Activated CD4-positive, alpha-beta memory T cell treated with anti-CD3 and anti-CD28 coated beads, Interleukin-2, amount 10 ng/mL, durations not matched to agents 7 days and 5 days (primary cell): ENCODE measurements at regions of chr16 and their contacts with region 1.

Region 1: GRCh38 chr16:27318392-27319226 is 4.8 kb downstream of the IL4R start:
- DNase-seq: peak; percentile 72
- H3K4me3 Mint-ChIP-seq: peak overlapping the region; percentile 97
- H3K27ac Mint-ChIP-seq: peak overlapping the region; percentile 98
- H3K4me1 Mint-ChIP-seq: peaks cover 75% of the 10 kb centered on the region
- H3K27me3 Mint-ChIP-seq: no peaks in the 10 kb centered on the region

Region 2: DNA sequence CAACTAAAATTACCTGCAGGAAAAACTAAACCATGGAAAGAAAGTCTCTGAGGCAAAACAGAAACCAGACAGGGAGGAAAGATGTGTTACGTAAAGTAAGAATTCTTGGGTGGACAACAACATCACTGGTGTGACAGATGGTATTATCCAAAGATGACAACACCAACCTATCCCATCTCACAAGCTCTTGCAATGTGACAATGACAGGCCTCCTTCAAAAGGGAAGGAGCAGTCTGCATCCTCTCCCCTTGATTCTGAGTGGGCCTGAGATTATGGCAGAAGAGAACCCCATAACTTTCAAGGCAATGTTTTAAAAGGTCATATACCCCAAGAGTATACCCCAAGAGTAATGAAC is 132.9 kb before region 1 on chr16:
- CTCF ChIA-PET with region 1: no interaction called
- POLR2A ChIA-PET with region 1: no interaction called
- DNase-seq: no peak
- H3K4me3 Mint-ChIP-seq: no peak overlapping the region
- H3K27ac Mint-ChIP-seq: no peak overlapping the region
- H3K4me1 Mint-ChIP-seq: peaks cover 3% of the 10 kb centered on the region
- H3K27me3 Mint-ChIP-seq: peaks cover 12% of the 10 kb centered on the region

Region 3: DNA sequence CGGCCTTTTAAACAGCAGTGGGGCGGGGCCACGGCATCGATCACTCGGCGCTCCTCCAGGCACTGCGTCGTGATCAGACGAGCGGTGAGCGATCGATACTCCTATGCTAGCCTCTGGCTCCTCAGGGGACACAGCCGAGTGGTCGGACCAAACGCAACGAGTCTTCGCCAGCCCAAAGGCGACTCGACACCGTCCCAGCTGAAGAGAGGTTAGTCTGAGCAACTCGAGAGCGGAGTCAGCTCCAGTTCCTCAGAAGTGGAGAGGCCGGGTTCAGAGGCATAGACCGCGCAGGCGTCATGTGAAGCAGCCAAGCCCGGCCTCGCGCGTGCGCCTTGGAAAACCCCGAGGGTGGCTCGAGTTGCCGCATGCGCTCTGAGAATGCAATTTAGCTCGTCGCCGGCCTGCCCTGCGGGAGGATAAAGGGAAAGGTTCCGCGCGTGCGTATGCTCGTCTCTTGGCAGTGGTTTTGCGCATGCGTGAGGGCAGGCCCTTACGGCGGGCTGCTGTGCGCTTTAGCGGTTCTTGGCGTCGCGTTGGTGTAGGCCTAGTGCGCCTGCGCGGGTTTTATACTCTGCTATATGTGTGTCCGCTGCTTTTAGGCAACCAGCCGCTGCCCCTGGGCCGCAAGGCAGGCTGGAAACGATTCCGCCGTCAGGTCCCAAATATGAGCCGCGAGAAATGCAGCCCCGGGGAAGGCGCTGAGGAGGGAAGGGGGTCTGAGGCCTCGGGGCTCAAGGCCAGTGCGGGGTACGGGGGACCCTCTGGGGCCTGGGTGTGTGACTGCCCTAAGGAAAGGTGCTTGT is 115.0 kb before region 1 on chr16 and contains the start of gene KDM8:
- CTCF ChIA-PET with region 1: interaction called, 10 read pairs
- POLR2A ChIA-PET with region 1: interaction called, 26 read pairs
- DNase-seq: peak; percentile 100
- H3K4me3 Mint-ChIP-seq: peak within 1 kb of the TSS; percentile 95
- H3K27ac Mint-ChIP-seq: peak within 1 kb of the TSS; percentile 99
- H3K4me1 Mint-ChIP-seq: peaks cover 56% of the 10 kb centered on the region
- H3K27me3 Mint-ChIP-seq: no peaks in the 10 kb centered on the region
- total RNA-seq, gene KDM8: 12.7 to 14.3 TPM

Region 4: GRCh38 chr16:27340654-27341053 is 22.0 kb after region 1 on chr16:
- CTCF ChIA-PET with region 1: interaction called, 3 read pairs
- POLR2A ChIA-PET with region 1: interaction called, 11 read pairs
- DNase-seq: no peak
- H3K4me3 Mint-ChIP-seq: no peak overlapping the region
- H3K27ac Mint-ChIP-seq: peak overlapping the region; percentile 31
- H3K4me1 Mint-ChIP-seq: peaks cover 18% of the 10 kb centered on the region
- H3K27me3 Mint-ChIP-seq: no peaks in the 10 kb centered on the region